ENCODE measurements at regions of chr17 and their contacts with region 1.

Region 1: DNA sequence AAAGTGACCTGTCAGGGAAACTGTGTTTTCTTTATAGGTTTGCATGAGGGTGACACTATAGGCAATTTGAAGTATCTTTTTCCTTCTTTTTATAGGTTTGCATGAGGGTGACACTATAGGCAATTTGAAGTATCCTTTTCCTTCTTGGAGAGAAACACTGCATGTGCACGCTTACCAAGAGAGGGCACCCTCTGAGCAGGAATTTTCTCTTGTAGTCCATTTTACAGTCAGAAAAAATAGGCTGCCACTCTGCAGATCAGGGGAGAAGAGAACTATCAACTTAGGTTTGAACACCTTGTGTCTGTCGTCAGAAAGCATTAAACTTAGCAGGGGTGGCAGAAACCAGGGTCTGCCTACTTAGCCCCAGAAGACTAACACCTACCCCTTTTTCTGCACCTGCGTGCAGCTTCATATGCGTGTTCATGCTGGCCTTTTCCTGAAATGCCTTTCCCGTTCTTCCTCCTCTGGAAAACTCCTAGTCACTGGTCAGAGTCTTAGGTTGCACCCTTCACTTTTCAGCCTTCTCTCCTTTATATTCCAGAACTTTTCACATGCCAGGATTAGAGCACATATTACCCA is 16.4 kb upstream of the SMIM36 start:
- DNase-seq: peak; percentile 30
- H3K4me3 ChIP-seq: no peak overlapping the region
- H3K27ac ChIP-seq: no peak overlapping the region
- H3K4me1 ChIP-seq: no peaks in the 10 kb centered on the region
- H3K27me3 ChIP-seq: no peaks in the 10 kb centered on the region
- CTCF ChIP-seq: peak; percentile 41 to 76

Region 2: GRCh38 chr17:55496094-55496881 is 31.3 kb before region 1 on chr17:
- CTCF ChIA-PET with region 1: no interaction called
- dilution Hi-C with region 1: no loop called
- in situ Hi-C with region 1: no loop called
- intact Hi-C with region 1: no loop called
- DNase-seq: peak; percentile 67
- H3K4me3 ChIP-seq: no peak overlapping the region
- H3K27ac ChIP-seq: no peak overlapping the region
- H3K4me1 ChIP-seq: no peaks in the 10 kb centered on the region
- H3K27me3 ChIP-seq: no peaks in the 10 kb centered on the region
- CTCF ChIP-seq: no peak

Region 3: DNA sequence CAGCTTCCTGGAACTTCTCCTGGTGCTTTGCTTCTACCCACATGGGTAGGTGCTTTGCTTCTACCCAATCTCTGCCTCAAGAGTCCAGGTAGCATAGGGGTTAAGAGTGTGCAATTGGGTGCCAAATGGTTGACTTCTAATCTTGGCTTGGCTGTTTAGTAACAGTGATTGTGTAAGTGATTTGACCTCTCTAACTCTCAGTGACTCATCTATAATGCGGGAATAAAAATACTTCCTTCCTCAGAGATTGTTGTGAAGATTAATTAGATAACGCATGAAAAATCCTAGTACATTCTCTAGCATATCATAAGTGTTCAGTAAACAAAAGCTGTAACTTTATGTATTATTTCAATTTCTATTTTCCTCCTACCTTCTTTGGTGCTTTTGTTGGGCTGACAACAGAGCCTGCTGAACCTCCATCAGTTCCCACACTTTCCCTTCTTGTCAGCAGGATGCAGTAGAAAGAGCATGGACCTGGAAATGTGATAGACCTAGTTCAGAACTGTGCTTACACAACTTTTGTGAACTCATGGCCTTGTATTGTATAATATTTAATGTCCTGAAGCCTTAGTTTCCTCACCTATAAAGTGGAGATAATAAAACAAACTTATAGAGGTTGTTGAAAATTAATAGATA is 56.5 kb after region 1 on chr17:
- CTCF ChIA-PET with region 1: no interaction called
- dilution Hi-C with region 1: no loop called
- in situ Hi-C with region 1: no loop called
- intact Hi-C with region 1: loop called (anchors 1 kb)
- DNase-seq: peak; percentile 53
- H3K4me3 ChIP-seq: no peak overlapping the region
- H3K27ac ChIP-seq: no peak overlapping the region
- H3K4me1 ChIP-seq: peaks cover 11% of the 10 kb centered on the region
- H3K27me3 ChIP-seq: no peaks in the 10 kb centered on the region
- CTCF ChIP-seq: no peak

Region 4: GRCh38 chr17:55607731-55608341 is 80.2 kb after region 1 on chr17:
- CTCF ChIA-PET with region 1: no interaction called
- dilution Hi-C with region 1: no loop called
- in situ Hi-C with region 1: loop called (anchors 5 kb)
- intact Hi-C with region 1: no loop called
- DNase-seq: no peak
- H3K4me3 ChIP-seq: no peak overlapping the region
- H3K27ac ChIP-seq: no peak overlapping the region
- H3K4me1 ChIP-seq: no peaks in the 10 kb centered on the region
- H3K27me3 ChIP-seq: no peaks in the 10 kb centered on the region
- CTCF ChIP-seq: no peak

Region 5: DNA sequence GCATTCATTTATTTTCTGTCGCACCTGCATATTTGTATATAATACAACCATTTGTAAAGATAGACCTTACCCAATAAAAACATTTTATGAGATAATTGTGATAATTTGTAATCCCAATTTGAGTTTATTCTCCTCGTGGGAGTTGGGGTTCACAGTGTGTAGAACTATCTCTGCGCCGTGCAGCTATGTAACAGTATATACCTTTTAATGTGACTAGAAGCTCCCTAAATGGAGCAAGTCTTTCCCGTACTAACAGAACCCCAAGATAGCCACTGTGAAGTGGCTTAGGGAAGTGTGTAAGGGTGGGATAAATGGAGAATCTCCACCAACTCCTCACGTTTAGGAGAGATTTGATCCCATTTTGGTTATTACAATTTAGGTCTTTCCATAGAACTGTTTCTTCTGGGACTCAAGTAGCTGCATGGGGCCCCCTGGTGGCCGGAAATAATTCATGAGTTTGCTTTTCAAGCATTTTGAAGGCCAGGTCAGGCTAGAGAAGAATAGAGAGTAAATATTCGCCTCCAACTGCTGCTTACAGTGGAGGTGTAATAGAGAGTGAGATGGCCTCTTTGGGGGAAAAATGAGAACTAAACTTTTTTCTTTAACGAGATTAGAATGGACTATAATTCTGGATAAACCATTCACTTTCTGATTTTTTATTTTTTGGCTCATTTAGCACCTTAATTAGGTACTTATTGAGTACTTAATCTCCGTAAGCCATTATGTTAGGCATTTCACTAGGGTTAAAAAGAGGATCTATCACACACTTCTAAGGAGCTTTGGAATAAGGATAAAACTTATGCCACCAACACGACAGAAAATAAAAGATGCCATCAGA is 190.5 kb after region 1 on chr17:
- CTCF ChIA-PET with region 1: no interaction called
- dilution Hi-C with region 1: no loop called
- in situ Hi-C with region 1: loop called (anchors 5 to 10 kb)
- intact Hi-C with region 1: loop called (anchors 1 kb)
- DNase-seq: peak; percentile 42
- H3K4me3 ChIP-seq: no peak overlapping the region
- H3K27ac ChIP-seq: no peak overlapping the region
- H3K4me1 ChIP-seq: peaks cover 3% of the 10 kb centered on the region
- H3K27me3 ChIP-seq: no peaks in the 10 kb centered on the region
- CTCF ChIP-seq: peak; percentile 78 to 80

Region 6: DNA sequence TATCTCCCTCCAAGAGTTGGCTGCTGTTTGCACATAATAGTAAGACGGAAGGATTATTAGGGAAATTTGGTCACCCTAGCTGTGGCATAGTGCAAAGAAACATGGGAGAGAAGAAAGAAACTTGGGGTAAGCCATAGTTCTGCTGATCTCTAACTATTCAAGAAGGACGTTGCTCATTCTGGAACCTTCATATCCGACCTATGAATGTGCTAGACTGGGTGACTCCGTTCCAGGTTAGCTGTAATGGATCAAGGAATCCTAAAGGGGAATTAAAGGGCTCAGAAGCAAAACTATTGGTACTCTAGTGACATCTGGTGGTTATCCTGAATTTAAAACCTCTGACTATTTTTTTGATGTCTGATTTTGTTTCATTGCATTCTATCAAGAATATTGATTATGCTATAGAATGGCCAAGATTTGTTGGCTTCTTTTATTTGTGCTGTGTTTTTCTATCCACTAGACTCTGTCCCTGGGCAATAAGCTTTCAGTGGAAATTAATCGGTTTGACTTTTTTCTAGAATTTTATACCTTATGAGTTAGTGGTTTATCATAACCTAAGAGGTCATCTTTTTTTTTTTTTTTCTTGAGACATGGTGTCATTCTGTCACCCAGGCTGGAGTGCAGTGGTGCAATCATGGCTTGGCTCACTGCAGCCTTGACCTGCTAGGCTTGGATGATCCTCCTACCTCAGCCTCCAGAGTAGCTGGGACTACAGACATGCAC is 242.7 kb after region 1 on chr17:
- CTCF ChIA-PET with region 1: no interaction called
- dilution Hi-C with region 1: loop called (anchors 25 kb)
- in situ Hi-C with region 1: loop called (anchors 5 kb)
- intact Hi-C with region 1: loop called (anchors 1 kb)
- DNase-seq: peak; percentile 56
- H3K4me3 ChIP-seq: no peak overlapping the region
- H3K27ac ChIP-seq: no peak overlapping the region
- H3K4me1 ChIP-seq: peaks cover 11% of the 10 kb centered on the region
- H3K27me3 ChIP-seq: no peaks in the 10 kb centered on the region
- CTCF ChIP-seq: peak; percentile 38 to 57

Region 7: GRCh38 chr17:56319517-56319916 is 791.9 kb after region 1 on chr17:
- CTCF ChIA-PET with region 1: no interaction called
- dilution Hi-C with region 1: no loop called
- in situ Hi-C with region 1: no loop called
- intact Hi-C with region 1: loop called (anchors 1 kb)
- DNase-seq: peak; percentile 58
- H3K4me3 ChIP-seq: no peak overlapping the region
- H3K27ac ChIP-seq: no peak overlapping the region
- H3K4me1 ChIP-seq: no peaks in the 10 kb centered on the region
- H3K27me3 ChIP-seq: no peaks in the 10 kb centered on the region
- CTCF ChIP-seq: peak; percentile 48 to 76

Measured in mammary epithelial cell (primary cell).